PC-9 (cell line): ENCODE measurements at regions of chr2 and their contacts with region 1.

Region 1: GRCh38 chr2:234425619-234426603 is 71.0 kb downstream of the ARL4C start:
- DNase-seq: peak; percentile 83 to 85
- H3K4me3 ChIP-seq: no peak overlapping the region
- H3K27ac ChIP-seq: peak overlapping the region; percentile 44
- H3K4me1 ChIP-seq: peaks cover 68% of the 10 kb centered on the region
- H3K27me3 ChIP-seq: no peaks in the 10 kb centered on the region
- CTCF ChIP-seq: no peak

Region 2: DNA sequence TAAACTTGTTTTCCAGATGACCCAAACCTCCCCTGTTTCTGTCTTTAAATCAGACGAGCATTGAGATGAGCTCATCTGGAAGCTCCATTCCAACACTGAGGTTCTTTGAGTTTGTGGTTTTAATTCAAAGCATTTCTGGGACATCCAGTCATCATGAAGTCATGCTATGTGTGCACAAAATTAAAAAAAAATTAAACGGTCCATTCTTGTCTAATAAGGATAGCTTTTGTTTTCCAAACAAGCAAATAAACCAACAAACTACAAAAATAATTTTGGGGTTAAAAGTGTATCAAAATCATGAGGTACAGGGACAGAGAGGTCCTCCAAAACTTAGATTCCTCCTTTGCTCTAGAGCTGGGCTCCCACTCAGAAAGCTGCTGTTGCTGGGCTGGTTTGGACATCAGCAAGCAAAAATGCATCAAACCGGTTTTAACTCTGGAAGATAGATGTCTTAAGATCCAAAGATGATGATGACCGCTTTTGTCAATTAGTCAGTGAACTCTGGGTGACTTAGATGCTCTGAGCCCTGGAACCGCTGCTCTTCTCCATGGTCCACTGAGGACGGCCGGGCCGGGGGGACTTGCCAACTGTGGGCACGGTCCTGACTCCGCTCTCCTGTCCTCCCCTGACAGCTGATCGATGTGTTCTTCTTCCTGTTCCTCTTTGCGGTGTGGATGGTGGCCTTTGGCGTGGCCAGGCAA is 443.3 kb before region 1 on chr2:
- CTCF ChIA-PET with region 1: no interaction called
- POLR2A ChIA-PET with region 1: no interaction called
- intact Hi-C with region 1: loop called (anchors 2 kb)
- DNase-seq: peak; percentile 56 to 85
- H3K4me3 ChIP-seq: no peak overlapping the region
- H3K27ac ChIP-seq: peak overlapping the region; percentile 12; the same call in 1 of the 2 replicates
- H3K4me1 ChIP-seq: peaks cover 36% of the 10 kb centered on the region
- H3K27me3 ChIP-seq: no peaks in the 10 kb centered on the region
- CTCF ChIP-seq: no peak

Region 3: GRCh38 chr2:234251326-234252271 is 174.3 kb before region 1 on chr2:
- CTCF ChIA-PET with region 1: interaction called, 7 read pairs
- POLR2A ChIA-PET with region 1: interaction called, 7 read pairs
- intact Hi-C with region 1: loop called (anchors 1 kb)
- DNase-seq: peak; percentile 81 to 99
- H3K4me3 ChIP-seq: no peak overlapping the region
- H3K27ac ChIP-seq: peak overlapping the region; percentile 91
- H3K4me1 ChIP-seq: peaks cover 80% of the 10 kb centered on the region
- H3K27me3 ChIP-seq: no peaks in the 10 kb centered on the region
- CTCF ChIP-seq: no peak

Region 4: DNA sequence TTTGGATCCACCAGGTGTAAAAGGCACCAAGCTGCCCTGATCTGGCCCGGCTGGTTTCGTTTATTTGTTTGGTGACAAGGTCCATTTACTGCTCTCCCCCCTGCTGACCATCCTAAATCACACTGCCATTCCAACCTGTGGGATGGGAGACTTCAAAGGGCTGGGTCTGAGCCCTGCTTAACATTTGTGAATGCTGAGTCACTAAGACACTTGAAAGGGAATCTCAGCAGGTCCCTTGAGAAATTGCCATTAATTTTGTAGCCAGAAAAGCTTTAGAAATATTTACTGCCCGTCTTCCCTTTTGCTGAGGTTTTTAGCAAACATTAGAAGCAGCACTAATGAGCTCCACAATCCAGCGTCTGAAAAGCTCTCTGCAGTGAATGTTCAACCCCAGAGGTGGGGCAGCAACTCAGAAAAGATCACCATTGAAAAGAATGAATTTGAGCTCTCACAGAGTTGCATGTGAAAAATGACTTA is 62.9 kb before region 1 on chr2:
- CTCF ChIA-PET with region 1: interaction called, 15 read pairs
- POLR2A ChIA-PET with region 1: interaction called, 3 read pairs
- intact Hi-C with region 1: loop called (anchors 2 kb)
- DNase-seq: peak; percentile 73 to 99
- H3K4me3 ChIP-seq: peak overlapping the region; percentile 32; the same call in 1 of the 2 replicates
- H3K27ac ChIP-seq: peak overlapping the region; percentile 86
- H3K4me1 ChIP-seq: peaks cover 78% of the 10 kb centered on the region
- H3K27me3 ChIP-seq: no peaks in the 10 kb centered on the region
- CTCF ChIP-seq: no peak

Region 5: DNA sequence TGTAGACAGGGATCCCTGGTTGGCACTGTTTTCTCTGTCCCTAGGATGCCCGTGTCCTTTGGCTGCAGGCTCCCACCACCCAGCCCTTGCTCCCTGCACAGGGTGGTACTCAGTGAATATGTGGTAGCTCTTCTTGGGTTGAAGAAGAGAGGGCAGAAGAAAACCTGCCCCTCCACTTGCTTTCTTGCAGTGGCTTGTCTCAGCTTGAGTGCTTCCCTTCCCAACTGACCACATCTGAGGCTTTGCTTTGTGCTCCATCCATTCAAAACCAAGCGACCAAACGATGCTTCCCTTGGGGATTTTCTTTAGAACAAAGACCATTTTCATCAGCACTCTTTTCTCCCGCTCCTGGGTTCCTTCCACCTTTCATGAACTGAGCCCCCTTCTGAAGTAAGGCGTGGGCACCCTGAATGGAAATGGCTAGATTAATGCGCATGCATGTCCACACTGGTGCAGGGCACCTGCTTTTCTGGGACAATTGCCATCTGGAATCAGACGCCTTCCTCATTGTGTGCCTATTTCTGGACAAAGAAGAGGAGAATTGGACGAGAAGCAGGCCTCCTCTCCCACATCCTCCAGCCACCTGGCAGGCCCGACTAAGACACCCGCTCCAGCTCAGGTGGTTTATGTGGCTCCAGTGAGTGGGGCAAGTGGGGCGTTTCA is 11.9 kb after region 1 on chr2:
- CTCF ChIA-PET with region 1: no interaction called
- POLR2A ChIA-PET with region 1: no interaction called
- intact Hi-C with region 1: no loop called
- DNase-seq: no peak
- H3K4me3 ChIP-seq: no peak overlapping the region
- H3K27ac ChIP-seq: no peak overlapping the region
- H3K4me1 ChIP-seq: peaks cover 7% of the 10 kb centered on the region
- H3K27me3 ChIP-seq: no peaks in the 10 kb centered on the region
- CTCF ChIP-seq: no peak

Region 6: DNA sequence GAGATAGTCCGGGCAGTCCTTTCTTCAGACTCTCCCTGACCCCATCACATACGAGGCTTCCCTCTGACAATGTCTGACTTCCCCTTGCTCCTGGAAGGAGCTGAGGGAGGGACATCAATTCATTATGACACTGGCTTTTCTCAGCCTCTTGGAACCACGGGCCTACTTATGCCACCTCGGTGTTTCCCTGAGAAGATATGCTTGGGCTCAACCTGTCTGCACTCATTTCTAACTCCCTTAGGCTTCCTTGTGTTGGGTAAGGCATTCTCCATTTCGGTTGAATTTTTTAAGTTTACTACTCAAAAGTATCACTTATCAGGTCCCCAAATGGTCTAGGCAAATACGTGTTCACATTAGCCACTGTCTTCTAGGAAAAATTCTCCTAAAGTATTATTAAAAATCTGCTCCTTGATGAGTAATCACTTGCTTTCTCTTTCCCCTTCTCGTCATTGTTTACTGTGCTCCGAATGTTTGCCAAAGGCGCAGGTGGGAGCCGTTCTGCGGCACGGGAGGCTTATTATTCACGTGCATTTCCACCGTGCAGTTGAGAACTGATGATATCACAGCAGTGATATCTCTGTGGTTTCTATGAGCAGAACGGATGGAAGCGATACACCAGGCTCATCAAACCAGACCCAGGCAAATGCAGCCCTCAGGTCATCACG is 37.8 kb after region 1 on chr2:
- CTCF ChIA-PET with region 1: no interaction called
- POLR2A ChIA-PET with region 1: interaction called, 7 read pairs
- intact Hi-C with region 1: loop called (anchors 1 kb)
- DNase-seq: peak; percentile 83 to 94
- H3K4me3 ChIP-seq: peak overlapping the region; percentile 32; the same call in 1 of the 2 replicates
- H3K27ac ChIP-seq: 0 out of 2 replicates have a peak overlapping the region, but pooled peaks have one; percentile 6
- H3K4me1 ChIP-seq: peaks cover 37% of the 10 kb centered on the region
- H3K27me3 ChIP-seq: no peaks in the 10 kb centered on the region
- CTCF ChIP-seq: no peak

Region 7: DNA sequence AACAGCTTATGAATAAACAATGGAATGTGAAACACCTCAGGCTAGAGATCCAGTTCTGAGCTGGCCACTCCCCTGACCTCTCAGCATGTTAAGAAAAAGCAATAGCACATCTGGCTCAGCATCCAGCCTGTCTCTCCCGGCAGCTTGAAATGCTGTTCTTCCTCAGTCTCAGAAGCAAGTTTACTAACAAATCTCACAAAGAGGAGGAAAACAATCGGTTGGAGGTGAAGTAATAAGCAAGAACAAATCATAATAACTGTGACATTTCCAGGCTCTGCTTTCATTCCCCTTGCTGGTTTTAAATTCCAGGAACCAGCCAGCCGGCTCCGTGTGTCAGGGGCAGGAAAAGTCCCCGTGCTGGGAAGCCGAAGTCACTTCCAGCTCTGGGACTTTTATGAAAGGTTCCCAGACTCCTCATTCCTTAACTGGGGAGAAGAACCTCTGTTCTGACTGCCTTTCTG is 204.9 kb after region 1 on chr2:
- CTCF ChIA-PET with region 1: no interaction called
- POLR2A ChIA-PET with region 1: no interaction called
- intact Hi-C with region 1: no loop called
- DNase-seq: peak; percentile 45 to 63
- H3K4me3 ChIP-seq: no peak overlapping the region
- H3K27ac ChIP-seq: no peak overlapping the region
- H3K4me1 ChIP-seq: peaks cover 32% of the 10 kb centered on the region
- H3K27me3 ChIP-seq: no peaks in the 10 kb centered on the region
- CTCF ChIP-seq: no peak

Region 8: DNA sequence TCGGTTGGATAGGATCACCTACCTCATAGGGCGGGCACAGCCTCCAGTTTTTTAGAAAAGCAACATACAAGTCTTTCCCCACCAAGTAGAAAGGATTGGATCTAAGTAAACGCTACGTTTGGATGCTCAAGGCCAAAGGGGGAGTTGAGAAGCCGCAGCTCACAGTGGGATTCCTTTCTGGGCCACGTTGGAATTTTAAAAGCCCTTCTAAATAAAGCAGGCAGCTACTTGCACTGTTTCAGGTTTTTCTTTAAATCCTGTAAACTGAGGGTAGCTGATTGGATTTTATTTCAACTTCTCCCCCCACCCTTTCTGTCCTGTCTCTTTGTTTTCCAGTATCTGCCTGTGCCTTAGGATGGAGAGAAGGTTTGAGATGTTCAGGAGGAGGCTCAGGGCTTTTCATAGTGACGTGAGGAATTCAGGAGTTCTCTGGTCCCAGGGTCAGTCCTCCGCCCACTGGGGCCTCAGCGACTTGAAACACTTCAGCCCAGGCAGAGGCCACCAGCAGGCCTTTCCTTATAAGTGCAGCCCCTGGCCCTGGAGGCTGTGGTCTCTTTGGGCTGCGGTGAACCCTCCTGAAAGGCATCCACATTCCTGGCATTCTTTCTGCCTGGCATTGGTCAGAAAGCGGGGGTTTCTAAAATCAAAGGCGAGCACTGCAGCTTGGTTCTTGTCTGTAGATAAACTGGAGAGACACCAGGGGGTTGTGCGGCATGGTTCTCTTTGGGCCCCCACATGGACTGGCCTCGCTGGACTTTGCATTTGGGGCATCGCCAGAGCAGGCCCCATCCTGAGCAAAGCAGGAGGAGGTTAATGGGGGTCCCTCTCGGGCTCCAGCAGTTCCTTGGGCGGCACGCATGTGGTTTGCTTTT is 570.4 kb after region 1 on chr2:
- CTCF ChIA-PET with region 1: interaction called, 3 read pairs
- POLR2A ChIA-PET with region 1: interaction called, 13 read pairs
- intact Hi-C with region 1: no loop called
- DNase-seq: peak in 1 of 2 experiments; percentile 89
- H3K4me3 ChIP-seq: no peak overlapping the region
- H3K27ac ChIP-seq: 0 out of 2 replicates have a peak overlapping the region, but pooled peaks have one; percentile 6
- H3K4me1 ChIP-seq: peaks cover 41% of the 10 kb centered on the region
- H3K27me3 ChIP-seq: no peaks in the 10 kb centered on the region
- CTCF ChIP-seq: no peak